ENCODE measurements at regions of chr6 and their contacts with region 1.

Region 1: GRCh38 chr6:55694759-55695158 is 115.8 kb upstream of the HMGCLL1 start:
- DNase-seq: peak; percentile 28
- H3K4me3 ChIP-seq: no peak overlapping the region
- H3K27ac ChIP-seq: no peak overlapping the region
- H3K4me1 ChIP-seq: peaks cover 20% of the 10 kb centered on the region
- H3K27me3 ChIP-seq: no peaks in the 10 kb centered on the region
- CTCF ChIP-seq: no peak

Region 2: GRCh38 chr6:55659304-55659703 is 35.5 kb before region 1 on chr6:
- CTCF ChIA-PET with region 1: no interaction called
- POLR2A ChIA-PET with region 1: no interaction called
- intact Hi-C with region 1: loop called (anchors 1 kb)
- DNase-seq: peak; percentile 74
- H3K4me3 ChIP-seq: no peak overlapping the region
- H3K27ac ChIP-seq: no peak overlapping the region
- H3K4me1 ChIP-seq: peaks cover 16% of the 10 kb centered on the region
- H3K27me3 ChIP-seq: no peaks in the 10 kb centered on the region
- CTCF ChIP-seq: no peak

Region 3: DNA sequence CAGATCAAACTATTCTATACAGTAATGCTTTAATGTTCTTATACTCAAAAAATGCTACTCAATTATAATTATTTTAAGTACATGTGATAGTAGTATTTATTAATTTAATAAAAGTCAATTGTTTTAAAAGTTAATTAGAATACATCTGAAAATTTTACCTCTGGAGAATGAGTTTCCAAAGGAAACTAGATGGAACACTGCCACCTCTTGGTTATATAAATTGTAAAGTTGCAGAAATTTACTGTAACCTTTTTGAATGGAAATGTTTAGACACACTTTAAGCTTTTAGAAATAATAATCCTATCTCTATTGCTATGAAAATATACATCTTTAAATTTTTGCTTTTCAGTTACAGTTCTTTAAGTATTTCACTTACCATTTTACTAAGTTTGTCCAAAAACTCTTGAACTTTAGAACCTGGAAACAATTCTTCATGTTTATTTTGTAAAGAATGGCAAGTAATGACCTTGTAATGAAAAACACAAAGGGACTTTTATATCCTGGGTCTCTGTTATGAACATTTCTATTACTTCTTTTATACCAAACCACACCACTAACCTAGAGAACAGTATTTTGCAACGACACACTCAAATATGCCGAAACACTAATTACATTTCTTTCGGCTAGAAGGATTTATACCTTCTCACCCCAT is 191.6 kb after region 1 on chr6:
- CTCF ChIA-PET with region 1: no interaction called
- POLR2A ChIA-PET with region 1: no interaction called
- intact Hi-C with region 1: no loop called
- DNase-seq: peak; percentile 39
- H3K4me3 ChIP-seq: no peak overlapping the region
- H3K27ac ChIP-seq: no peak overlapping the region
- H3K4me1 ChIP-seq: peaks cover 14% of the 10 kb centered on the region
- H3K27me3 ChIP-seq: no peaks in the 10 kb centered on the region
- CTCF ChIP-seq: peak; percentile 66

Measured in A673 (cell line).